ENCODE measurements at regions of chr1 and their contacts with region 1.

Region 1: GRCh38 chr1:62783723-62784508 is at the start of gene ATG4C:
- DNase-seq: peak; percentile 90
- H3K4me3 Mint-ChIP-seq: no peak within 1 kb of the TSS
- H3K27ac Mint-ChIP-seq: no peak within 1 kb of the TSS
- H3K4me1 Mint-ChIP-seq: peaks cover 3% of the 10 kb centered on the region
- H3K27me3 Mint-ChIP-seq: peaks cover 14% of the 10 kb centered on the region
- total RNA-seq, gene ATG4C: 8.2 and 10.1 TPM in 2 replicates

Region 2: DNA sequence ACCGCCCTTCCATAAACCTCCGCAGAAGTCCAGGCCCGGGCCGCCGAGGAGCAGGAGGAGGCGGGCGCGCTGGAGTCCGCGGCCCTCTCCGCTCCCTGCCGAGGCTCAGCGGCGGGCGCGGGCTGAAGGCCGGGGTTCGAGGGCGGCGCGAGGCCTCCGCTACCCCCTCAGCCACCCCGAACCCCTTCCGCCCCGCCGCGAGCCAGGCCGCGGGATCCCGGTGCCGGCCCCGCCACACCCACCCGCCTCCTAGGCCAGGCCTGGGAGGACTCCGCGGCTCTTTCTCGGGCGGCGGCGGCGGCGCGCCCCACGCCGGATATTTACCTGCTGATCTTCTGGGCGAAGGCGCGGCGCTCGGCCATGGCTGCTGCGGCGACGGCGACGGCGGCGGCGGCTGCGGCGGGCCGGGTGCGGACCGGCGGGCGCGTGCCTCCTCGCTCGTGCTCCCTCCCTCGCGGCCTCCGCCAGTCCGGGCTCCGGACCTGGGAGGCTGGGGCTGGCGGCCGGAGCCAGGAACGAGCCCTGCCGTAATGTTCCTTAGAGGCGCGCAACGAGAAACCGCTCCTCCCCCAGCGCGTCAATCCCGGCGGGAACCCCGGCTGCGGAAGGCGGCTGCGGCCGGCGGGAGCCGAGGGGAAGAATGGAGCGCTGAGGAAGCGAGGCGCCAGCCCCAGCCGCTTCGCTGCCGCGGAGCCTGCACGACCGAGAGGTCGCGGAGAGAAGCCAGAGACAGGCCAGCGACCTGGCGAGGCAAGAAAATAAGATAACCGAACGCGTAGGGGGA is 95.8 kb before region 1 on chr1 and contains the start of gene DOCK7:
- intact Hi-C with region 1: loop called (anchors 2 kb)
- DNase-seq: peak; percentile 52
- H3K4me3 Mint-ChIP-seq: peak within 1 kb of the TSS; percentile 86
- H3K27ac Mint-ChIP-seq: peak within 1 kb of the TSS; percentile 74
- H3K4me1 Mint-ChIP-seq: peaks cover 26% of the 10 kb centered on the region
- H3K27me3 Mint-ChIP-seq: no peaks in the 10 kb centered on the region
- total RNA-seq, gene DOCK7: 17.8 and 21.2 TPM in 2 replicates

Region 3: DNA sequence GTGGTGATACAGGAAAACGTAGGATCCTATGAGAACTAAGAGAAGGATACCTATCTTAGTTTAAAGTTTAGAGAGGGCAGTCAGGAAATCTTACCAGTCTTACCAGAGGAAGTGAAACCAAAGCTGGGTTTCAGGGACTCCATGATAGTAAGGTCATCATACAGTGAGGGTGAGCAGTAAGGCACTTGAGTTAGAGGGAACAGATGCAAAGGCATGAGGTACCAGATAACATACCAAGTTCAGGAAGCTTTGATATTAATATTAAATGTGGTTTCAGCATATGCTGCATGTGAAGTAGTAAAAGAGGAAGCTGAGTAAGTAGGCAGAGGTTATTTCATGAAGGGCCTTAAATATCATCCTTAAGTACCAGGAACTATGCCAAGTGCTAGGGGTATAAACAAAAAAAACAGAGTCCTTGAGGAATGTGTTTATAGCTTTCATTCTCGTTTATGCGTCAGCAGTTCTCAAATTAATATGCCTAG is 16.9 kb after region 1 on chr1:
- intact Hi-C with region 1: loop called (anchors 2 kb)
- DNase-seq: no peak
- H3K4me3 Mint-ChIP-seq: no peak overlapping the region
- H3K27ac Mint-ChIP-seq: no peak overlapping the region
- H3K4me1 Mint-ChIP-seq: peaks cover 10% of the 10 kb centered on the region
- H3K27me3 Mint-ChIP-seq: no peaks in the 10 kb centered on the region

Measured in activated T-helper 2 cell treated with anti-CD3 and anti-CD28 coated beads, Interferon-gamma antibody, Interleukin-2, Interleukin-4, amounts not matched to agents 10 μg/mL and 5 μg/mL and 100 μg/mL, durations not matched to agents 14 hours and 24 hours and 36 hours (primary cell).